ENCODE measurements at regions of chr12 and their contacts with region 1.

Region 1: DNA sequence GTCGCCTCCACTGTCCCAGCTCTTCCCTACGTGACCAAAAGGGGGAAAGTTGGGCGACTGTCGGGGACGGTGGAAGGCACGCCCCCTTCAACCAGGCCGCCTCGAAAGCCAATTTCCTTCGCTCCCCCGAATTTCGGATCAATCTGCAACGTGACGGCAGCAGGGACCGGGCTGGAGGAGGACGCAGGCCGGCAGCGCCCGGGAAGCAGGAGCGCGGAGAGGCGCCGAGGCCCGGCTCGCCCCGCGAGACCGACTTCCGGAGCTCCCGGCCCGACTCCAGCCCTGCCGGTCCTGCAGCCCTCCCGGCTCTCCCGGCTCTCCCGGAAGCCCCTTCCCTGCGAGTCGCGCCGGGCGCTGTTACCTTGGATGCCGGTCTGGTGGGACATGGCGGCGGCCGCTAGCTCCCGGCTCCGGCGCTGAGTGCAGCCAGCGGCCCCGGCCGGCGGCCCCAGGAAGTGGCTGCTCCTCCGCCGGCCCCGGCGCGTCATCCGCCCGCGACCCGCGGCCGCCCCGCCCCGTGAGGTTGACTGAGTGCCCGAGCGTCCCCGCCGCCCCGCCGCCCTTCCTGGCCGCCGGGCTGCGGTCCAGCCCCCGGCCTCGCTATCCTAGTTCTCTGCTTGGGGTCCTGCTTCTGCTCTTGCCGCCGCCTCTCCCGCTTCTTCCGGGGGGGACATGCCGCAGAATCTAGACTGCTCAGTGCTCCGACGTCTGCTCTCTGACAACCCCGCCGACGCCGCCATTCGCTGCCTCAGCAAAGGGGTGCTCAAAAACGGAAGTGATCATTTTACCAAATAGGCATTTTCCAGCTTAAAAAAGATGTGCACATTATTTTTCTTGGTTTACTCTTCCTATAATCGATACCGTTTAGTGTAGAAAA is at the start of gene TWF1:
- DNase-seq: peak; percentile 93
- CTCF ChIP-seq: no peak

Region 2: DNA sequence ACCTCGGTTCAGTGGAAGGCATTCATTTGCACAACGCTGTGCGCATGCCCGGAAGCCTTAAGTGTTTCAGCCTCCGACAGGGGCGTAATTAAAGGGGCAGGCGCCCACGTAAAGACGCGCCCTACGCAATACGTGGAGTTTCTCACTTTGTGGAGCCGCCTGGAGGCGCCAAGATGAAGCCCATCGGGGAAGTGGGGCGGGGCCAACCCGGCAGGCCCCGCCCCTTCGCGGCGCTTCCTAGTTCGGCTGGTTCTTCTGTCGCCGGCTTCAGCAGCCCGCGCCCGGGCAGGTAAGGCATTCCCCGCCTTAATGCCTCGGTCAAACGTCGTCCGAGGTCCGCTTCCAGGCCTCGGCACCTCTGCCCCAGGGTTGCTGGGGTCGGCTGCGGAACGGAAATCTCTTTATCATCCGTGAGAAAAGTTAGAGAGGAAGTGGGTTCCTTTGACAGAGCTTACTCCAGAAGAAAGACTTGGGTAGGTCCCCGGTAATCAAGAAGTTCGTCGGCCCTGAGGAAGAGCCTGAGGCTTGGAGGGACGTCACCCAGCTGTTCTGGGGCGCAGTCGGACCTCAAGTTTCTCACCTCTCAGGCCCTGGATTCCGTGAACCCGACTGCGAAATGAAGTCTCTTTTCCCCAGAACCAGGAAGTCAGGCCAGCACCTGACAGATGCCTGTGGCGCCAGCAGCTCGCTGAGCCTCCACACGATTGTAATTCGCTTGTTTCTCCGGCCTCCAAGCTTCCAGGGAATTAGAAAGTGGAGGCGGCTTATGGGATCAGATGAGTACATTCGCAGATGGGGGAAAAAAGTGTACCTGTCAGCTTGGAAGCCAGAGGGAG is 47.2 kb before region 1 on chr12 and contains the starts of genes IRAK4 and PUS7L:
- CTCF ChIA-PET with region 1: interaction called, 10 read pairs
- POLR2A ChIA-PET with region 1: no interaction called
- DNase-seq: peak; percentile 96
- CTCF ChIP-seq: peak; percentile 56

Region 3: DNA sequence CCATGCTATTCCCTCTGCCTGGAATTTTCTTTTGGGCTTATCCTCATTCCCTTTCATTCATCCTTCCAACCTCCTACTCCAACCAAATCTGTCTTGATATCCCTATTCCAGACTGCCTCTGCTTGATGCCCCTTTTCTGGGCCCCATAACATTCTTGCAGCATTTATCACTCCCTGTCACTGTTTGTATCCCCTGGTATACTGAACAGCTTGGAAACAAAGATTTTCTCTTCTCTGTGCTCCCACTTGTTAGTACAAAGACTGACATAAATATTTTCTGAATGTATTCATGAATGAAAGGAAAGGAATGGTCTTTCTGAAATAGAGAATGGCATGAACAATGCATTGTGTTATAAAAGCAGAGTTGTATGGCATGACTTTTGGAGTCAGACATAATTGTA is 39.8 kb before region 1 on chr12:
- CTCF ChIA-PET with region 1: interaction called, 10 read pairs
- POLR2A ChIA-PET with region 1: no interaction called
- DNase-seq: no peak
- CTCF ChIP-seq: no peak

Region 4: GRCh38 chr12:43789941-43790340 is 16.2 kb before region 1 on chr12:
- CTCF ChIA-PET with region 1: interaction called, 14 read pairs
- POLR2A ChIA-PET with region 1: interaction called, 4 read pairs
- DNase-seq: no peak
- CTCF ChIP-seq: no peak

Region 5: GRCh38 chr12:43861015-43861839 is 55.1 kb after region 1 on chr12:
- CTCF ChIA-PET with region 1: no interaction called
- POLR2A ChIA-PET with region 1: no interaction called
- DNase-seq: no peak
- CTCF ChIP-seq: no peak

Region 6: GRCh38 chr12:43882578-43883178 is 76.6 kb after region 1 on chr12:
- CTCF ChIA-PET with region 1: interaction called, 11 read pairs
- POLR2A ChIA-PET with region 1: no interaction called
- DNase-seq: peak; percentile 55
- CTCF ChIP-seq: peak; percentile 64

Region 7: GRCh38 chr12:43921666-43922337 is 115.7 kb after region 1 on chr12:
- CTCF ChIA-PET with region 1: no interaction called
- POLR2A ChIA-PET with region 1: no interaction called
- DNase-seq: no peak
- CTCF ChIP-seq: no peak

Measured in GM10248 (cell line).